Mammary epithelial cell (primary cell): ENCODE measurements at regions of chr9 and their contacts with region 1.

Region 1: GRCh38 chr9:121074635-121075385 is at the start of gene CNTRL:
- DNase-seq: peak; percentile 89
- H3K4me3 ChIP-seq: peak within 1 kb of the TSS; percentile 57 to 92 (median 69)
- H3K27ac ChIP-seq: peak within 1 kb of the TSS; percentile 86
- H3K4me1 ChIP-seq: peaks cover 28% of the 10 kb centered on the region
- H3K27me3 ChIP-seq: no peaks in the 10 kb centered on the region
- CTCF ChIP-seq: no peak
- total RNA-seq, gene CNTRL: 7.2 to 15.0 TPM

Region 2: DNA sequence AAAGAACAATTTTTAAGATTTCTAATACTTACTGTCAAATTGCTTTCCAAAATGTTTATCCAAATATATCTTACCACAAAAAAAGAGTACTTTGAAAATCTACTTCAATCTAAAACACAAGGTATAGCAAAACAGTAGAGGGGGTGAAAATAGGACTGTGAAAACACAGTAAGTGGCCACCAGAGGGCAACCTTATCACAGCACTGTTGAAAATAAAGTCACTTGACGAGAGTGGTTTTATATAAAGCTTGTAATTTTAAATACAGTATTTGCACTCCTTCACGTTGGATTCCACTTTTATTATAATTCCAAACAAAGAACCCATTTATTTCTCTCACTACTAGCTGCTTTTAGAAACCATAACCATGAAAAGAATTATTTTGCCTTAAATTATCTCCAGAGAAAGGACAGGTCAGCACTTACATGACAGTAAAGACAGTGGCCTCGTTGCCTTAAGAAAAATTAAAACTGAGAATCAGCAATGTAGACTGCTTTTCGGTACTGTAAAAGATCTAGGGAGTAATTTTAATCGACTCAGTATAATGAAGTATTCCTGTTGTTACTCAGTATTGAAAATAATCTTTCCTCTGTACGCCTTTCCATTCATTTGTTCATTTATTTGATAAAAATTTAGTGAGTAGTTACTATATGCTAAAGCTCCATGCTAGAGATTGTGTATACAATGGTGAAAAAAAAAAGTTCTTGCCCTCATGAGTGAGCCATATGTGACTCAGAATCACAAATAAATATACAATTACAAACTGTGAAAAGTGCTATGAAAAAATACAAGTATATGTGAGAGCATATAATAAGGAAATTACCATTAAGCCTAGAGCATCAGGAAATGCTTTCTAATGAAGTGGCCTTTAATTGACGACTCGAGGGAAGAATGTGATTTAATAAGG is 454.8 kb before region 1 on chr9:
- CTCF ChIA-PET with region 1: no interaction called
- dilution Hi-C with region 1: no loop called
- in situ Hi-C with region 1: no loop called
- intact Hi-C with region 1: loop called (anchors 5 kb)
- DNase-seq: peak; percentile 55
- H3K4me3 ChIP-seq: no peak overlapping the region
- H3K27ac ChIP-seq: peak overlapping the region; percentile 7
- H3K4me1 ChIP-seq: peaks cover 18% of the 10 kb centered on the region
- H3K27me3 ChIP-seq: no peaks in the 10 kb centered on the region
- CTCF ChIP-seq: peak; percentile 74 to 77

Region 3: DNA sequence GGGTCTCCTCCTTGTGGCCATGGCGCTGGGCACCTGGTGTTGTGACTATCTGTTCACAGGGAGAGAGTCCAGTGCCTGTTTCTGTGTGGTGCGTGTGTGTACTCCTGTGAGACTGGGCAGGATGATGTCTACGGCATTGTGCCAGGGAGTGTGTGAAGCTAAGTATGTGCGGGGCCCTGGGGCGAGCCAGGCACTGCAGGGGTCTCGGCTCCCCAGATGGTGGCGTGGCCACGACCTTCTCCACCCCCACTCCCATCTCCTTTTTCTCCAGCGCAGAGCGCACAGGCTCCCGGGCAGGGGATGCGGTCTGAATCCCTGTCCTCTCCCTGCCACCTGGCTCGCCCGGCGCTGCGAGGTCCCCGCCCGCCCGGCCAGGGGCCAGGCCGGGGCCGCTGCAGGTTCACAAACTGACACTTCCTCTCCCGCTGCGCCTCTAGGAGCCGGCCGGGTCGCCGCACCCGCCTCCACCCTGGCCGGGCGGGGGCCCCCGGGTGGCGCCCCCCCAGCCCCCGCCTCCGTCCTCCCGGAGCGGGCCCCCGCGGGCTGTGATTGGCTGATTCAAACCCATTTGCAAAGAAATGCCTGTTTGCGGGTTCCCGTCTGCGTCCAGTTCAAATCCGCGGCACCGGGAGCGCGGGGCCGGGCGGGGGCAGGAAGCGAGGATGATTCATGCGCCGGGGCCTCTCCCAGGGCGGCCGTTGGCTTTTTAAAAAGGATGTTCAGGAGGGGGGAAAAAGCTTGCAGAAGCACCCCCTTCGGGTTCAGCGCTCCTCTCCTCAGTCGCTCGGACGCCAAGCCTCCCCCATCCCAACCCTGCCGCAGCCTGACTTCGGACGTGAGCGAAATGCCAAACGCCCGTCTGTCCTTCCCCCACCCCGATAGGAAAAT is 198.6 kb before region 1 on chr9:
- CTCF ChIA-PET with region 1: no interaction called
- dilution Hi-C with region 1: no loop called
- in situ Hi-C with region 1: no loop called
- intact Hi-C with region 1: loop called (anchors 10 kb)
- DNase-seq: peak; percentile 83
- H3K4me3 ChIP-seq: peak overlapping the region; percentile 66 to 74 (median 69)
- H3K27ac ChIP-seq: peak overlapping the region; percentile 70
- H3K4me1 ChIP-seq: peaks cover 32% of the 10 kb centered on the region
- H3K27me3 ChIP-seq: no peaks in the 10 kb centered on the region
- CTCF ChIP-seq: no peak

Region 4: GRCh38 chr9:120985810-120986222 is 89.0 kb before region 1 on chr9:
- CTCF ChIA-PET with region 1: no interaction called
- dilution Hi-C with region 1: no loop called
- in situ Hi-C with region 1: no loop called
- intact Hi-C with region 1: loop called (anchors 1 kb)
- DNase-seq: peak; percentile 34
- H3K4me3 ChIP-seq: no peak overlapping the region
- H3K27ac ChIP-seq: no peak overlapping the region
- H3K4me1 ChIP-seq: no peaks in the 10 kb centered on the region
- H3K27me3 ChIP-seq: no peaks in the 10 kb centered on the region
- CTCF ChIP-seq: peak; percentile 56 to 67

Region 5: DNA sequence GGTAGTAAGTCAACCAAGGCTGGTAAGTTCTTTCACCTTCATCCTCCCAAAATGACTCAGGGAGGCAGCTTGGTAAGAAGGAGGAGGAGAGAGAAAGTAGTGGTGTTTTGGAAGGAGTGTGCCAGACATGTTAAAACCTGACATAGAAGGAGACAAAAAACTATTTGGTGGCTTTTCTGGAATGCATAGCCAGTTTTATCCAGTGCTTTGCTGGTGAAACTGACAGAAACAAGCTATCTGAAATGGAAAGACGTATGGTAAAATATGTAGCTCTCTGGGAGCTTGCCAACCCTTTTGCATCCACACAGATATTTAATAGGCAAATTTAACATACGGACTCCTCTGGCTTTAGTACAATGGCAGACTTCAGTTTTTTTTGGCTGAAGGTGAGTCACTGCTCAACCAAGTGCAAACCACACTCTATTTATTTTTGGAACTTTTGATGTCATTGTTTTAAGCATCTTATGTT is 81.5 kb after region 1 on chr9:
- CTCF ChIA-PET with region 1: no interaction called
- dilution Hi-C with region 1: no loop called
- in situ Hi-C with region 1: no loop called
- intact Hi-C with region 1: loop called (anchors 5 kb)
- DNase-seq: peak; percentile 97
- H3K4me3 ChIP-seq: no peak overlapping the region
- H3K27ac ChIP-seq: peak overlapping the region; percentile 41
- H3K4me1 ChIP-seq: peaks cover 39% of the 10 kb centered on the region
- H3K27me3 ChIP-seq: no peaks in the 10 kb centered on the region
- CTCF ChIP-seq: no peak

Region 6: GRCh38 chr9:121286973-121287741 is 212.3 kb after region 1 on chr9:
- CTCF ChIA-PET with region 1: no interaction called
- dilution Hi-C with region 1: no loop called
- in situ Hi-C with region 1: no loop called
- intact Hi-C with region 1: loop called (anchors 10 kb)
- DNase-seq: peak; percentile 99
- H3K4me3 ChIP-seq: peak overlapping the region in 1 of 3 experiments; percentile 32
- H3K27ac ChIP-seq: peak overlapping the region; percentile 100
- H3K4me1 ChIP-seq: peaks cover 63% of the 10 kb centered on the region
- H3K27me3 ChIP-seq: no peaks in the 10 kb centered on the region
- CTCF ChIP-seq: peak; percentile 17 to 46

Region 7: DNA sequence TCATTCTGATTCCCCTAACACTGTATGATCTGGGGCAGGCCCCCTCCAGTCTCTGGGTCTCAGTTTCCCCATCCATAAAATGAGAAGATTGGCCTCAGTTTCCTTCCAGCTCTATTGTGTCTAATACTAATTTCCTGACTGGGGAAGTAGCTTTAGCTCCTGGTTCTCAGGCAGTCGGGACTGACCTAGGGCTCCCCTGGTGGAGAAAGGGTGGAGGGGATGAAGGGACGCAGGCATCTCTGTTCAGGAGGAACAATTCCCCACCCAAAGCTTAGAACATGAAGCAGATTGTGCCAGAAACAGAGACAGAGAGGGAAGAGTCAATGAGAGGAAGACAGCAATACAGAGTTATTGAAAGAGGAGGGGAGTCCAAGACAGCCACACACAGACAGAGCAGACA is 1281.8 kb after region 1 on chr9:
- CTCF ChIA-PET with region 1: no interaction called
- dilution Hi-C with region 1: no loop called
- in situ Hi-C with region 1: no loop called
- intact Hi-C with region 1: no loop called
- DNase-seq: no peak
- H3K4me3 ChIP-seq: no peak overlapping the region
- H3K27ac ChIP-seq: no peak overlapping the region
- H3K4me1 ChIP-seq: peaks cover 16% of the 10 kb centered on the region
- H3K27me3 ChIP-seq: no peaks in the 10 kb centered on the region
- CTCF ChIP-seq: peak; percentile 20 to 28